Right ventricle myocardium superior (tissue), 1 donor: ENCODE measurements at regions of chrX and their contacts with region 1.

Region 1: GRCh38 chrX:74349387-74349786 is 45.4 kb downstream of the ZCCHC13 start:
- DNase-seq: no peak
- ATAC-seq: no peak

Region 2: GRCh38 chrX:73850124-73851013 is 499.0 kb before region 1 on chrX:
- intact Hi-C with region 1: loop called (anchors 5 kb)
- DNase-seq: no peak
- ATAC-seq: no peak